PC-9 (cell line): ENCODE measurements at regions of chr3 and their contacts with region 1.

Region 1: DNA sequence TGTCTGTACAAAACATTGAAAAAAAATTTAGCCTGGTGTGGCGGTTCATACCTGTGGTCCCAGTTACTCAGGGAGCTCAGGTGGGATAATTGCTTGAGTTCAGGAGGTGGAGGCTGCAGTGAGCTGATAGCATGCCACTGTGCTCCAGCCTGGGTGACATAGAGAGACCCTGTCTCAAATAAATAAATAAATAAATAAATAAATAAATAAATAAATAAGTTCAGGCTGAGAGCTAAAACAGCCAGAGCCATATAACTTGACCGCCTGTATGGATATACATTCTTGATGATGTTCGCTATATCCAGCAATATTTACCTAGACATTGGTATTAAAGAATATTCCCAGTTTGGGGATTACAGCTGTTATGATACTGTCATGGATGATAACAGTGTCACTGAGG is 146.9 kb downstream of the KCNH8 start:
- DNase-seq: no peak
- H3K4me3 ChIP-seq: no peak overlapping the region
- H3K27ac ChIP-seq: no peak overlapping the region
- H3K4me1 ChIP-seq: no peaks in the 10 kb centered on the region
- H3K27me3 ChIP-seq: no peaks in the 10 kb centered on the region
- CTCF ChIP-seq: no peak

Region 2: DNA sequence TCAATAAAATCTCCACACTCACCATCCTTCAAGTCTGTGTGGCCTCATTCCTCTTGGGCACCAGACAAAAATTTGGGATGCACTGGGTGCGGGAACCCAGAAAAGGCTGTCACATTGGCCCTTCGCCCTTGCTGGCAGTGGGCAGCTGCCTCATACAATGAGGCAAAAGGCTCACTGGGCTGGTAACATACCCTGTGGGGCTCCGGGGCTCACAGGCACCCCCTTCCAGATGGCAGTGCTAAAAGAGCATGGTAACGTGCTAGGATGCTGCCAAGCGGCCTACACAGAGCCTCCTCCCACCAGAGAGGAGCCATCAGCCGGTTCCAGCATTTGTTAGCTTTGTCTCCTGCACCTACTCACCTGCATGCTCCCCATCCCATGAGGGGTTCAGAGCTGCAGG is 211.4 kb before region 1 on chr3:
- CTCF ChIA-PET with region 1: no interaction called
- POLR2A ChIA-PET with region 1: interaction called, 11 read pairs
- intact Hi-C with region 1: no loop called
- DNase-seq: no peak
- H3K4me3 ChIP-seq: no peak overlapping the region
- H3K27ac ChIP-seq: no peak overlapping the region
- H3K4me1 ChIP-seq: no peaks in the 10 kb centered on the region
- H3K27me3 ChIP-seq: no peaks in the 10 kb centered on the region
- CTCF ChIP-seq: no peak

Region 3: DNA sequence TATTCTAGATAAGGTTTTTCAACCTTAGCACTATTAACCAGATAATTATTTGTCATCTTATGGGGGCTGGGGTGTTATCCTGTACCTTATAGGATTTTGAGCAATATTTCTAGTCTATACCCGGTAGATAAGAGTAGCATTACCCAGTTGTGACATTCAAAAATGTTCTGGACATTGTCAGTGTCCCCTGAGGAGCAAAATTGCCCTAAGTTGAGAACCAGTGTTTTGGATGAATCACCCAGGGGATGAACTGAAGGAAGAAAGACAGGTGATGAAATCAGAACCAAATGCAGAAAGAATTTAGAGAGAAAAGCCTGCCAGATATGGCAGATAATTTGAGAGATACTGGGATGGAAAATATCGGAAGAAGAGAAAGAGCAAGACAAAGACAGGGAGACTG is 88.7 kb before region 1 on chr3:
- CTCF ChIA-PET with region 1: no interaction called
- POLR2A ChIA-PET with region 1: no interaction called
- intact Hi-C with region 1: no loop called
- DNase-seq: no peak
- H3K4me3 ChIP-seq: no peak overlapping the region
- H3K27ac ChIP-seq: no peak overlapping the region
- H3K4me1 ChIP-seq: no peaks in the 10 kb centered on the region
- H3K27me3 ChIP-seq: no peaks in the 10 kb centered on the region
- CTCF ChIP-seq: no peak

Region 4: GRCh38 chr3:19399356-19399755 is 104.1 kb after region 1 on chr3:
- CTCF ChIA-PET with region 1: no interaction called
- POLR2A ChIA-PET with region 1: no interaction called
- intact Hi-C with region 1: no loop called
- DNase-seq: no peak
- H3K4me3 ChIP-seq: no peak overlapping the region
- H3K27ac ChIP-seq: no peak overlapping the region
- H3K4me1 ChIP-seq: no peaks in the 10 kb centered on the region
- H3K27me3 ChIP-seq: no peaks in the 10 kb centered on the region
- CTCF ChIP-seq: no peak

Region 5: DNA sequence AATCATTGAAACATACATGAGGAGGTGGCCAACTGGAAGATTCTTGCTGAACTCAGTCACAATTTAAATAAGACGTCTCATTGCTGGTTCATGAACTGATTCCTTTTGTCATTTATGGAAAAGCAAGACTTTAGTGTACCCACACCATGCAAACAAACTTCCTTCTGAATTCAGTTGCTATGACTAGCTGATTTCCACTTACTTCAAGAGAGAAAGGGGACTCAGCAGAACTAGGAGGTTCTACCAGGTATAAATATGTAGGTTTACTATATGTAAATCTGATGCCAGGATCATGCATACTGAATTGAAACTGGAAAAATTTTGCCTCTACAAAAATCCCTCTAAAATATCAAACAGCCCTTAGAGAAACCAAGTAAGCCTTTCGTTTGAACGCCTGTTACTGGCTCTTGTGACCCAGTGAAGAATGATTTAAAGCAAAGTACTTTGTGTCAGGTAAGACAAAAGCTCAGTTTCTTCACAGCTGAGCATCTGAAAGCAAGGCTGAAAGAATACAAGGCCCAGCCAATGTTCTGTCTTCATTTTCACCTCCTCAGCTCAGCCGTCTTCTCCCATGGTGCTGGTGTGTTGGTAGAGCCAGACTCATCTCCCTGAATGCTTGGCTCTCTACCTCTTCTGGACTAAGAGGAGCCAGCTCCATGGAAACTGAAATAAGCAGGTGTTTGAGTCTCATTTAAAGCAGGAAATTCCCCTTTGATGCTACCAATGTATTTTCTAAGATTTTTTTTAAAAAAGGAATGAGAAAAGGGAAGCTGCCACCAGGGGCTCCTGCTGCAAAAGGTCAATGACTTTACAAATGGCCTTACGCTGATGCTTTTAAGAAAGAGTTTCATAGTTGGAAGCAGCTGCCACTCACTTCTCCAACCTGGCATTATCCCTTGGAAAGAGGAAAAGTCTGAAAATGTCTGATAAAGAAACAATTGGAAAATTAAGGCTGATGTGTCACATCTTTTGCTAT is 337.2 kb after region 1 on chr3:
- CTCF ChIA-PET with region 1: no interaction called
- POLR2A ChIA-PET with region 1: no interaction called
- intact Hi-C with region 1: no loop called
- DNase-seq: no peak
- H3K4me3 ChIP-seq: no peak overlapping the region
- H3K27ac ChIP-seq: no peak overlapping the region
- H3K4me1 ChIP-seq: no peaks in the 10 kb centered on the region
- H3K27me3 ChIP-seq: no peaks in the 10 kb centered on the region
- CTCF ChIP-seq: no peak